ENCODE measurements at regions of chr16 and their contacts with region 1.

Region 1: DNA sequence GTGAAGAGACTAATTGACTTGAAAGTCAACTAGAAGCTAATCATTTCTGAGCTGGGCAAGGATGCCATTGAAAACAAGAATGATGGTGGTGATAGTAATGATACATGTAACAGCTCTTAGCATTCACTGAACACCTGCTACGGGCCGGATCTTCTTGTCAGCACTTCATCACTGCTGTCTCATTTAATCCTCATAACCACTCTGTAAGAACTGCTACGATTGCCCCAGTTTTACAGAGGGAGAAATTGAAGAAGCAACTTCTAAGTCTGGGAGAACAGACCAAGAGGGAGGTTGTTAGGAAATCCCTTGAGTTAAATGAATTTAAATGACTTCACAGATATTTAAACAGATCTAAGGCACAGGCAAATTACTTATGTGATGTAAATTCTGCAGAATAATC is 7.0 kb upstream of the GAN start:
- DNase-seq: no peak
- ATAC-seq: no peak
- H3K4me3 ChIP-seq: no peak overlapping the region
- H3K27ac ChIP-seq: no peak overlapping the region
- H3K4me1 ChIP-seq: peaks cover 12% of the 10 kb centered on the region
- CTCF ChIP-seq: no peak
- EP300 ChIP-seq: no peak
- POLR2A ChIP-seq: no peak
- RAD21 ChIP-seq: no peak

Region 2: GRCh38 chr16:81293909-81294823 is 13.6 kb before region 1 on chr16:
- CTCF ChIA-PET with region 1: interaction called, 3 read pairs
- POLR2A ChIA-PET with region 1: interaction called, 10 read pairs
- DNase-seq: no peak
- ATAC-seq: no peak
- H3K4me3 ChIP-seq: no peak overlapping the region
- H3K27ac ChIP-seq: no peak overlapping the region
- H3K4me1 ChIP-seq: peaks cover 10% of the 10 kb centered on the region; the same call in 2 of the 3 replicates
- CTCF ChIP-seq: no peak
- EP300 ChIP-seq: no peak
- POLR2A ChIP-seq: no peak
- RAD21 ChIP-seq: no peak

Region 3: DNA sequence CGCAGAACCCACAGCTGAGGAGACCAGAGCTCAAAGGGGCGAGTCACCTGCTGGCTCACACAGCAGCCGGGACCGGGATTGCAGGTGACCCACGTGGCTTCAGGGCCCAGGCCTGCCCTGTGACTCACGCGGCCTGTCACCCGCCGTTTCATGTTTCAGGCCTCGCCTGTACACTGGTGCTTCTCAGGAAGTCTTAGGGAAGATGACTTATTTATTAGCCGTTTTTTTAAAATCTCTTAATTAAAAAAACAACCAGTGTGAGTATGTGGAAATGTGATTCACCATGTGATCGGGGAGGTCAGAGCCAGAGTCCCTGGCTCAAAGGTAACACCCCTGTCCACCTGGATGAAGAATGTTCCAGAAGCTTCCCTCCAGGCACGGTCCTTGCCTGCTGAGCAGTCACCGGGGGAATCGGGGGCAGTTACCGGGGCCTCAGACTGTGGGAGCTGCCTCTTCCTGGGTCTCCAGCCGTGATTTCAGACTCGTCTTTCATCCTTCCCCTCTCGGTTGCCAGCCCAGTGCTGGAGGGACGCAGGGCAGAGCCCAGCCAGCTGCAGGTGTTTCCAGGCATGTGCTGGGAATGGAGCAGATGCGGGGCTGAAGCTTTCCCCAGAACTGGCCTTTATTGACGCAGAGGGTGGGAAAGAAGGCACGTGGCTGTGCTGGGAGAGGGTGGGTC is 186.1 kb after region 1 on chr16:
- CTCF ChIA-PET with region 1: no interaction called
- POLR2A ChIA-PET with region 1: no interaction called
- DNase-seq: peak; percentile 78 to 83
- ATAC-seq: peak; percentile 66 to 67
- H3K4me3 ChIP-seq: no peak overlapping the region
- H3K27ac ChIP-seq: peak overlapping the region; percentile 49 to 77
- H3K4me1 ChIP-seq: peaks cover 99% of the 10 kb centered on the region
- CTCF ChIP-seq: no peak
- EP300 ChIP-seq: no peak
- POLR2A ChIP-seq: no peak
- RAD21 ChIP-seq: no peak

Measured in A549 (cell line).